Spleen (tissue), 13 donors: ENCODE measurements at regions of chr1 and their contacts with region 1.

Region 1: GRCh38 chr1:212782422-212783154 is 9.0 kb downstream of the NSL1 start:
- DNase-seq: no peak
- H3K4me3 ChIP-seq: no peak overlapping the region
- H3K27ac ChIP-seq: peak overlapping the region in 3 of 8 donors; percentile 9 to 42 (median 24)
- H3K4me1 ChIP-seq: peaks cover 0 to 25% (median 3%) of the 10 kb centered on the region in 6 donors
- H3K27me3 ChIP-seq: no peaks in the 10 kb centered on the region
- CTCF ChIP-seq: peak in 10 of 11 experiments; percentile 30 to 75 (median 60)
- POLR2A ChIP-seq: no peak

Region 2: DNA sequence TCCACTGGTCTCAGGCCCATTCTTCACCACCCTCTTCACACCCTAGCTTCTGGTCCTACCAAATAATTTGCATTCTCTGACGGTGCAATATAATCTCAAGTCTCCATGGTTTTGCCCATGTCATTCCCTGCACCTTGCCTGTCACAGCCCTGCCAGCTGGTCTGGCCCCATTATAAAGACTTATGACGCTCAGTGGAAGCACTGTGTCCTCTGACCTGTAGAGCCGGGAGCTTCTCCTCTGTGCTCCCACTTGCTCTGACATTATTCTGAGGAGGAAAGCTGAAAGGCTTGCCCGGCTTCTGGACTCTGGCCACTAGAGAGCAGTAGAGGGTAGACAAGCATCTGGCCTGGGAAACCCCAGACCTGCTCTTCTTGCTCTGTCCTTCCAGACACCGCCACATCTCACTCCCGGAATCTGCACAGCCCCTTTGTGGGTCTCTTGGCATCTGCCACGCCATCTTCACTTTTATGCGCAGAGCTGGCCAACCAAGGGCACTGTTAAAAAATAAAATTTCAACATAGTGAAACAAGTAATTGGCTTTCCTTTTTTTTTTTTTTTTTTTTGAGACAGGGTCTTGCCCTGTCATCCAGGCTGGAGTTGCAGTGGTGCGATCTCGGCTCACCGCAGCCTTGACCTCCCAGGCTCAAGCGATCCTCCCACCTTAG is 305.4 kb before region 1 on chr1:
- intact Hi-C with region 1: loop called (anchors 5 kb)
- DNase-seq: peak; percentile 84
- H3K4me3 ChIP-seq: no peak overlapping the region
- H3K27ac ChIP-seq: no peak overlapping the region
- H3K4me1 ChIP-seq: peaks cover 0 to 11% (median 6%) of the 10 kb centered on the region in 6 donors
- H3K27me3 ChIP-seq: peaks cover 0 to 10% (median 0%) of the 10 kb centered on the region in 7 donors
- CTCF ChIP-seq: peak; percentile 74 to 93 (median 85)
- POLR2A ChIP-seq: no peak

Region 3: GRCh38 chr1:212665241-212666115 is 117.1 kb before region 1 on chr1:
- intact Hi-C with region 1: loop called (anchors 10 kb)
- DNase-seq: peak; percentile 95
- H3K4me3 ChIP-seq: peak overlapping the region; percentile 26 to 76 (median 46)
- H3K27ac ChIP-seq: peak overlapping the region; percentile 36 to 88 (median 72)
- H3K4me1 ChIP-seq: peaks cover 30 to 63% (median 49%) of the 10 kb centered on the region in 6 donors
- H3K27me3 ChIP-seq: no peaks in the 10 kb centered on the region
- CTCF ChIP-seq: peak; percentile 87 to 98 (median 95)
- POLR2A ChIP-seq: no peak

Region 4: GRCh38 chr1:212691561-212692071 is 91.0 kb before region 1 on chr1:
- intact Hi-C with region 1: no loop called
- DNase-seq: no peak
- H3K4me3 ChIP-seq: no peak overlapping the region
- H3K27ac ChIP-seq: no peak overlapping the region
- H3K4me1 ChIP-seq: peaks cover 0 to 20% (median 2%) of the 10 kb centered on the region in 6 donors
- H3K27me3 ChIP-seq: peaks cover 0 to 9% (median 0%) of the 10 kb centered on the region in 7 donors
- CTCF ChIP-seq: no peak
- POLR2A ChIP-seq: no peak

Region 5: DNA sequence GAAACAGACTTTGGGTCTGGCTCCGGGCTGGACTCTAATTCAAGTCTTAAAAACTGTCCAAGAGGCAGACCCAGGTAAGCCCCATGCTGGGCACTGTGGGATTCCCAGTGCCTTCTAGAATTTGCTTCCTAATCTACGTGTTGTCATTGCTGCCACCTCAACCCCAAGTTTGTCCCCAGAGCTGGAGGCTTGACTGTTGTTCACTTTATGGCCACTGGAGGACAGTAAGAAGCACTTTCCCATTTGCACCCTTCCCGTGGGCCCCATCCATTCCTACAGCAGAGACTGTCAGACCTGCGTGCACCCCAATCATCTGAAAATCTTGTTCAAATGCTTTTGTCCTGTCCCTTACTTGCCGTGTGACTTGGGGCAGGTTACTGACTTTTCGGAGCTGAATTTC is 138.3 kb after region 1 on chr1:
- intact Hi-C with region 1: no loop called
- DNase-seq: no peak
- H3K4me3 ChIP-seq: no peak overlapping the region
- H3K27ac ChIP-seq: no peak overlapping the region
- H3K4me1 ChIP-seq: peaks cover 0 to 8% (median 5%) of the 10 kb centered on the region in 6 donors
- H3K27me3 ChIP-seq: peaks cover 0 to 20% (median 0%) of the 10 kb centered on the region in 7 donors
- CTCF ChIP-seq: peak in 2 of 11 experiments; percentile 15
- POLR2A ChIP-seq: no peak